ENCODE measurements at regions of chr1 and their contacts with region 1.

Region 1: GRCh38 chr1:119613769-119614720 is 34.0 kb downstream of the ZNF697 start:
- DNase-seq: peak; percentile 52
- H3K4me3 Mint-ChIP-seq: no peak overlapping the region
- H3K27ac Mint-ChIP-seq: no peak overlapping the region
- H3K4me1 Mint-ChIP-seq: no peaks in the 10 kb centered on the region
- H3K27me3 Mint-ChIP-seq: peaks cover 5% of the 10 kb centered on the region

Region 2: GRCh38 chr1:119662034-119662437 is 48.0 kb after region 1 on chr1:
- intact Hi-C with region 1: loop called (anchors 1 kb)
- DNase-seq: no peak
- H3K4me3 Mint-ChIP-seq: no peak overlapping the region
- H3K27ac Mint-ChIP-seq: no peak overlapping the region
- H3K4me1 Mint-ChIP-seq: peaks cover 12% of the 10 kb centered on the region
- H3K27me3 Mint-ChIP-seq: peaks cover 21% of the 10 kb centered on the region

Measured in activated T-helper 1 cell treated with anti-CD3 and anti-CD28 coated beads, Interleukin-12 subunit alpha, Interleukin-12 subunit beta, Interleukin-2, Interleukin-4 antibody, amounts not matched to agents 30 ng/mL and 10 ng/mL and 1 ng/mL, durations not matched to agents 14 hours and 24 hours and 36 hours (primary cell).